K562 (cell line): ENCODE measurements at regions of chr1 and their contacts with region 1.

Region 1: GRCh38 chr1:112390775-112391602 is 5.0 kb upstream of the CTTNBP2NL start:
- DNase-seq: peak; percentile 90 to 94 (median 91)
- ATAC-seq: peak; percentile 93
- H3K4me3 ChIP-seq: peak overlapping the region; percentile 22
- H3K27ac ChIP-seq: no peak overlapping the region
- H3K4me1 ChIP-seq: peaks cover 4 to 21% of the 10 kb centered on the region in 2 experiments; a peak in 4 of 5 replicates
- H3K27me3 ChIP-seq: peaks cover 0 to 2% of the 10 kb centered on the region in 2 experiments; a peak in 1 of 5 replicates
- CTCF ChIP-seq: peak; percentile 93 to 99 (median 98)
- EP300 ChIP-seq: peak; percentile 44; the same call in 1 of the 2 replicates
- POLR2A ChIP-seq: no peak
- RAD21 ChIP-seq: peak; percentile 97 to 99

Region 2: GRCh38 chr1:112466078-112466660 is 75.2 kb after region 1 on chr1:
- CTCF ChIA-PET with region 1: interaction called, 25 read pairs
- POLR2A ChIA-PET with region 1: interaction called, 4 read pairs
- in situ Hi-C with region 1: loop called (anchors 5 kb)
- intact Hi-C with region 1: loop called (anchors 1 kb)
- DNase-seq: peak; percentile 85 to 94 (median 92)
- ATAC-seq: peak; percentile 90
- H3K4me3 ChIP-seq: no peak overlapping the region
- H3K27ac ChIP-seq: no peak overlapping the region
- H3K4me1 ChIP-seq: peaks cover 14 to 21% of the 10 kb centered on the region in 2 experiments
- H3K27me3 ChIP-seq: peaks cover 7 to 8% of the 10 kb centered on the region in 2 experiments
- CTCF ChIP-seq: peak; percentile 93 to 97 (median 94)
- EP300 ChIP-seq: 0 out of 2 replicates have a peak, but pooled peaks have one; percentile 8
- POLR2A ChIP-seq: no peak
- RAD21 ChIP-seq: peak; percentile 95 to 96

Region 3: GRCh38 chr1:112614460-112615065 is 223.6 kb after region 1 on chr1:
- CTCF ChIA-PET with region 1: interaction called, 9 read pairs
- POLR2A ChIA-PET with region 1: interaction called, 8 read pairs
- in situ Hi-C with region 1: loop called (anchors 5 kb)
- intact Hi-C with region 1: loop called (anchors 1 kb)
- DNase-seq: peak in 1 of 4 experiments; percentile 57
- ATAC-seq: peak; percentile 43
- H3K4me3 ChIP-seq: no peak overlapping the region
- H3K27ac ChIP-seq: no peak overlapping the region
- H3K4me1 ChIP-seq: peaks cover 0 to 6% of the 10 kb centered on the region in 2 experiments; a peak in 2 of 5 replicates
- H3K27me3 ChIP-seq: no peaks in the 10 kb centered on the region
- CTCF ChIP-seq: peak; percentile 65 to 79 (median 68); a peak in 5 of 6 replicates
- EP300 ChIP-seq: no peak
- POLR2A ChIP-seq: no peak
- RAD21 ChIP-seq: peak; percentile 54 to 76

Region 4: DNA sequence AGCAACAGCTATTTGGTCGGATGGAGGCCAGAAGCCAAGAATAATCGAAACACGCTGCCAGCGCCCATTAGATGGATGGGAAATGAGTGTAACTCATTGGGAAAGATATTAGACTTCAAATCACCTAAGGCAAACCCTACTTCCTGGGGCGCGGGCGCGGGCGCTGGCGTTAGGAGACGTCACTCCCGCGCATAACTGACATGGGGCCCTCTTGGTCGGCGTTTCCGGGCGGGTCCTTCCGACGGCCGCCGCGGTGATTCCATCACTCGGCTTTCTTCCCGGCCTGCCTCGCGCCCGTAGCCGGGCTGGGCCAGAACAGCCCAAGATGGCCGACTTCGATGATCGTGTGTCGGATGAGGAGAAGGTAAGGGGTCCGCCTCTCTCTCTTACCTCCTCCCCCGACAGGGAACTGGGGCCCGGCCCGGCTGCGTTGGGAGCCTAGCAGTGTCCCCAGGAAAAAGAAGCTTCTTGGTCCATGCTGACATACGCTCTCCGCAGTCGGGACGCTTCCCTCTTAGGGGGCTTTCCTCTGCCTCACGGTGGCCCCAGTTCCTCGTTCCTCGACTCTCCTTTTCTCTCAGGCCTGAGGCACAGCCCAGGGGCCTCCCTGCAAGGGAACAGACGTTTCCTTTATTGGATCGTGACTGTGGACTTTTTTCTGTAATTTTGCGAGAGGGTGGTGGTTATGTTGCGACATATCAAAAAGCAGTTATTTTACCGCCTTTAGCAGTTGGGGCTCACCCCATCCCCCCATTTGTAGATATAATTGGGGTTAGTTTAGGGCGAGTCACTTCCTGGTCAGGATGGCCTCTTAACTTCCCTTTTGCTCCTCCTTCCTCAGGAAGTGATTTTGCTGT is 228.8 kb after region 1 on chr1 and contains the start of gene CAPZA1:
- CTCF ChIA-PET with region 1: interaction called, 9 read pairs
- POLR2A ChIA-PET with region 1: interaction called, 8 read pairs
- in situ Hi-C with region 1: loop called (anchors 5 kb)
- intact Hi-C with region 1: loop called (anchors 1 kb)
- DNase-seq: peak; percentile 86 to 97 (median 90)
- ATAC-seq: peak; percentile 90
- H3K4me3 ChIP-seq: peak within 1 kb of the TSS; percentile 79
- H3K27ac ChIP-seq: peak within 1 kb of the TSS; percentile 99
- H3K4me1 ChIP-seq: peaks cover 6 to 16% of the 10 kb centered on the region in 2 experiments
- H3K27me3 ChIP-seq: no peaks in the 10 kb centered on the region
- CTCF ChIP-seq: no peak
- EP300 ChIP-seq: peak; percentile 82
- POLR2A ChIP-seq: peak; percentile 98
- RAD21 ChIP-seq: no peak; a peak in 1 of 4 replicates
- polyA plus RNA-seq, gene CAPZA1: 805 to 1,020 TPM

Region 5: GRCh38 chr1:112706908-112707663 is 316.1 kb after region 1 on chr1 and contains the start of gene RHOC:
- CTCF ChIA-PET with region 1: interaction called, 21 read pairs
- POLR2A ChIA-PET with region 1: no interaction called
- in situ Hi-C with region 1: loop called (anchors 5 kb)
- intact Hi-C with region 1: loop called (anchors 1 kb)
- DNase-seq: peak; percentile 90 to 96 (median 94)
- ATAC-seq: peak; percentile 83
- H3K4me3 ChIP-seq: peak within 1 kb of the TSS; percentile 94
- H3K27ac ChIP-seq: peak within 1 kb of the TSS; percentile 97
- H3K4me1 ChIP-seq: peaks cover 44 to 47% of the 10 kb centered on the region in 2 experiments
- H3K27me3 ChIP-seq: no peaks in the 10 kb centered on the region
- CTCF ChIP-seq: peak; percentile 96 to 97 (median 96)
- EP300 ChIP-seq: peak; percentile 29; the same call in 1 of the 2 replicates
- POLR2A ChIP-seq: peak; percentile 76
- RAD21 ChIP-seq: peak; percentile 98 to 99
- polyA plus RNA-seq, gene RHOC: 35.2 to 82.7 TPM

Region 6: GRCh38 chr1:112803906-112804762 is 413.1 kb after region 1 on chr1:
- CTCF ChIA-PET with region 1: interaction called, 7 read pairs
- POLR2A ChIA-PET with region 1: no interaction called
- in situ Hi-C with region 1: loop called (anchors 5 kb)
- intact Hi-C with region 1: loop called (anchors 2 kb)
- DNase-seq: peak; percentile 73 to 85 (median 76)
- ATAC-seq: peak; percentile 98
- H3K4me3 ChIP-seq: no peak overlapping the region
- H3K27ac ChIP-seq: no peak overlapping the region
- H3K4me1 ChIP-seq: peaks cover 0 to 3% of the 10 kb centered on the region in 2 experiments; a peak in 1 of 5 replicates
- H3K27me3 ChIP-seq: peaks cover 19 to 28% of the 10 kb centered on the region in 2 experiments; a peak in 4 of 5 replicates
- CTCF ChIP-seq: peak; percentile 96 to 98 (median 97)
- EP300 ChIP-seq: 0 out of 2 replicates have a peak, but pooled peaks have one; percentile 22
- POLR2A ChIP-seq: no peak
- RAD21 ChIP-seq: peak; percentile 99 to 100

Region 7: DNA sequence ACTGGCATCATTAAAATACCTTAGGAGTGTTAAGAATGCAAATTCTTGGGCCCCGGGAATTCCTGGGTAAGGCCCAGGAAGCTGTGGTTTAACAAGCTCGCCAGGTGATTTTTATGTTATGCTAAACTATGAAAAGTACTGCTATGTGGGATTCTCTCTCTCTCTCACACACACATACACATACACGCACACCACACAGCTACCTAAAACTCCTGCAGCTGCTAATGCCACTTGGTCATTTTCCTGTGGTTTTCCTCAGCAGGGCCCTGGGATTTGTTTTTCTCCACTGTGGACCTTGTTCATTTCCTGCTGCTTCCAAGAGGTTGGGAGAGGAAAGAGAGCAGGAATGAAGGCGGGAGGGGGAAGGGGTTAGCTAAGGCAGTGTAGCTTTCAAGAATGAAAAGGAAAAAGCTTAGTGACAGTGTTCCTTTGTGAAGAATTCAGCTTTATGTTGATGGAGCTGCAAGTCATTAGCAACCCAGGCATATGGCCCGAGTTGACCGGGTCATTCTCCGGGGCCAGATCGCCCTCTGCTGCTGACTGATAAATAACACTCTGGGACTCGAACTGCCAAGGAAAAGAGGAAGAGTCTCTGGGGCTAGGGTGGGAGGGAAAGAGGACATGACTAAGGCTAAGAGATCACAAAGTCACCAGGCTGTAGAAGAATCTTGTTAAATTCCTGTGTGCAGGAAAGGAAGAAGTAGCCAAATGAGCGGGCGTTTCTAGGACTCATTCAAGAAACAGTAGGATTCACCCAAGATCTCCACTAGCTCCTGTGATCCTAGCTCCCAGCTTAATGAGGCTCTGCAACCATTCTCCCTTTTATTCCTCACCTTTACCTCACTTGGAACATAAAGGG is 651.5 kb after region 1 on chr1:
- CTCF ChIA-PET with region 1: no interaction called
- POLR2A ChIA-PET with region 1: no interaction called
- in situ Hi-C with region 1: no loop called
- intact Hi-C with region 1: loop called (anchors 5 kb)
- DNase-seq: peak; percentile 85 to 96 (median 90)
- ATAC-seq: peak; percentile 97
- H3K4me3 ChIP-seq: no peak overlapping the region
- H3K27ac ChIP-seq: peak overlapping the region; percentile 72
- H3K4me1 ChIP-seq: peaks cover 18 to 49% of the 10 kb centered on the region in 2 experiments
- H3K27me3 ChIP-seq: no peaks in the 10 kb centered on the region
- CTCF ChIP-seq: peak; percentile 90 to 98 (median 93)
- EP300 ChIP-seq: peak; percentile 73
- POLR2A ChIP-seq: no peak
- RAD21 ChIP-seq: peak; percentile 98